Gastrocnemius medialis (tissue), 4 donors: ENCODE measurements at regions of chr1 and their contacts with region 1.

Region 1: GRCh38 chr1:205528887-205529825 is 24.7 kb downstream of the CDK18 start:
- DNase-seq: peak; percentile 35 to 39
- ATAC-seq: peak; percentile 66 to 77
- H3K4me3 ChIP-seq: peak overlapping the region; percentile 33 to 56 (median 46)
- H3K27ac ChIP-seq: peak overlapping the region in 1 of 4 donors; percentile 30
- H3K4me1 ChIP-seq: peaks cover 0 to 3% of the 10 kb centered on the region in 2 donors
- H3K27me3 ChIP-seq: peaks cover 0 to 3% (median 0%) of the 10 kb centered on the region in 3 donors
- CTCF ChIP-seq: peak; percentile 37 to 96 (median 91)
- POLR2A ChIP-seq: no peak

Region 2: GRCh38 chr1:205354259-205354904 is 174.8 kb before region 1 on chr1:
- in situ Hi-C with region 1: loop called in 2 of 4 experiments (anchors 10 kb)
- intact Hi-C with region 1: loop called (anchors 5 kb)
- DNase-seq: no peak
- ATAC-seq: peak in 1 of 2 donors; percentile 58
- H3K4me3 ChIP-seq: no peak overlapping the region
- H3K27ac ChIP-seq: no peak overlapping the region
- H3K4me1 ChIP-seq: no peaks in the 10 kb centered on the region
- H3K27me3 ChIP-seq: peaks cover 2 to 12% (median 7%) of the 10 kb centered on the region in 3 donors
- CTCF ChIP-seq: peak; percentile 51 to 76 (median 68)
- POLR2A ChIP-seq: no peak

Region 3: GRCh38 chr1:205396967-205397616 is 132.1 kb before region 1 on chr1:
- in situ Hi-C with region 1: loop called in 1 of 4 experiments (anchors 10 kb)
- intact Hi-C with region 1: loop called (anchors 1 kb)
- DNase-seq: no peak
- ATAC-seq: peak; percentile 83 to 85
- H3K4me3 ChIP-seq: no peak overlapping the region
- H3K27ac ChIP-seq: no peak overlapping the region
- H3K4me1 ChIP-seq: no peaks in the 10 kb centered on the region
- H3K27me3 ChIP-seq: no peaks in the 10 kb centered on the region
- CTCF ChIP-seq: peak; percentile 49 to 73 (median 71)
- POLR2A ChIP-seq: no peak

Region 4: DNA sequence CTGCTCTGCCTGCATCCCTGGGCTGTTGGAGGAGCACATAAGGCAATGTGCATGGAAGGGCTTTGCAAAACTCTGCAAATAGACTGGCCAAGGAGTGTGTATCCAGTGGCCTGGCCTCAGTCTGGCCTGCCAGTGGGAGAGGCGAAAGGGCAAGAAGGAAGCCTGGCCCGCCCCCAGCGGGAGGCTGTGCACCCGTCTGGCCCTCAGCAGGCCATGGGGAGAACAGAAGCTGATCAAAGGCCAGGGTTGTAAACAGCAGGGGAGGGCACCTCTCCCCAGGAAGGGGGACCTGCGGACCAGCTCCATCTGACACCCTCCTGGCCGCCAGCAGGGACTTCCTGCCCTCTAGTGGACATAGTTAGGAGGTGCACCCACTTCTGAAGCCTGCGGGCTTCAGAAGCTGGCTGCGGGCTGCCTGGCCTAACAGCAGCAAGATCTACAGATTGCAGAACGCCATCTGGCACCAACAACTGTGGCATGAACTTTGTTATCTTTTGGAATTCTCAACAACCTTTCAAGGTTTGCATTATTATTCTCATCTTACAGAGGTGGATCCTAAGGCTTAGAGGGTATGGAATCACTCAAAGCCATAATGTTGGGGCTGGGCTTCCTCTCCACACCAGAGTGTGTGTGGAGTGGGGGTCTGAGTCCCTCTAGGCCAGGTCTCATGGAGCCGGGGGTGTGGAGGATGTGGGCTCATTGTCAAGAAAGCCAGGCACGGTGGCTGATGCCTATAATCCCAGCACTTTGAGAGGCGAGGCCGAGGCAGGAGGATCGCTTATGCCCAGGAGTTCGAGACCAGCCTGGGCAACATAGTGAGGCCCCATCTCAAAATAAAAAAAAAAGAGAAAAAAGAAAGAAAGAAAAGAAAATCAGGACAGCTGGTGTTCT is 43.6 kb before region 1 on chr1:
- in situ Hi-C with region 1: loop called in 3 of 4 experiments (anchors 5 kb)
- intact Hi-C with region 1: loop called (anchors 1 kb)
- DNase-seq: peak in 1 of 2 donors; percentile 36
- ATAC-seq: peak; percentile 73 to 81
- H3K4me3 ChIP-seq: no peak overlapping the region
- H3K27ac ChIP-seq: no peak overlapping the region
- H3K4me1 ChIP-seq: no peaks in the 10 kb centered on the region
- H3K27me3 ChIP-seq: peaks cover 15 to 32% (median 23%) of the 10 kb centered on the region in 3 donors
- CTCF ChIP-seq: peak; percentile 78 to 97 (median 86)
- POLR2A ChIP-seq: no peak

Region 5: DNA sequence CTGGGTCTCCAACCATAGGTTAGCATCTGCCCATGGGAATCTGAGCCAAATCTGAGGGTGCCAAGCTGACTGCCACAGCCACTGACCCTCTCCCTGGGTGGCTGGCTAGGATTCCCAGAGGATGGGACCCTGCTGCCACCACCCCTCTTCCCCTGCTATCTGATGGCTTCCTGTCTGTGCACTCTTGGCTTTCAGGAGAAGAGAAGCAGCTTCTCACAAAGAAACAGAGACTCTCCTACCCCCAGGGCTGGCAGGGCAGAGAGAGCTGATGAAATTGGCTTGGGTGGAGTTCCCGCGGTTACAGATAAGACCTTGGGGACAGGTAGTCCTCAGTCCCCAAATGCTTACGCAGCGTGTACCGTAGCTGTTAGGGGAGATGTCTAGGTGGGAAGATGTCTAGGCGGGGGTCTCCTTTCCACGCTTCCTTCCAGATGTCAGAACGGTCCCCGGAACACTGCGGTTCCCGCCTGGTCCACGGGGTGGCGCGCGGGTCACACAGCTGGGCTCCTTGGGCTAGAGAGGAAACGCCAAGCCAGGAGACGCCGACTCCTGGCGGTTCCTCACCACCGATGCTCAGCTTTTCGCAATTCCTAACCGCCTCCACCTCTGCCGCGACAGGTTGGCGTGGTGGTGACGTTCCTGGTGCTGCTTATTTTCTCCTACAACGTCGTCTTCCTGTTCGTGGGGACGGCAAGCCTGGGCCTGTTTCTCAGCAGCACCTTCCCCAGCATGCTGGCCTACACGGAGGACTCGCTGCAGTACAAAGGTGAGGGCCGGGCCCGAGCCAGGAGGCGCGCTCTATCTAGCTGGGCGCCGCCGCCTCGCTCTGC is 62.6 kb after region 1 on chr1:
- in situ Hi-C with region 1: no loop called
- intact Hi-C with region 1: loop called (anchors 5 kb)
- DNase-seq: peak; percentile 58 to 74
- ATAC-seq: peak; percentile 80 to 94
- H3K4me3 ChIP-seq: peak overlapping the region; percentile 38 to 76 (median 46)
- H3K27ac ChIP-seq: no peak overlapping the region
- H3K4me1 ChIP-seq: no peaks in the 10 kb centered on the region
- H3K27me3 ChIP-seq: no peaks in the 10 kb centered on the region
- CTCF ChIP-seq: peak; percentile 98 to 99 (median 99)
- POLR2A ChIP-seq: no peak

Region 6: DNA sequence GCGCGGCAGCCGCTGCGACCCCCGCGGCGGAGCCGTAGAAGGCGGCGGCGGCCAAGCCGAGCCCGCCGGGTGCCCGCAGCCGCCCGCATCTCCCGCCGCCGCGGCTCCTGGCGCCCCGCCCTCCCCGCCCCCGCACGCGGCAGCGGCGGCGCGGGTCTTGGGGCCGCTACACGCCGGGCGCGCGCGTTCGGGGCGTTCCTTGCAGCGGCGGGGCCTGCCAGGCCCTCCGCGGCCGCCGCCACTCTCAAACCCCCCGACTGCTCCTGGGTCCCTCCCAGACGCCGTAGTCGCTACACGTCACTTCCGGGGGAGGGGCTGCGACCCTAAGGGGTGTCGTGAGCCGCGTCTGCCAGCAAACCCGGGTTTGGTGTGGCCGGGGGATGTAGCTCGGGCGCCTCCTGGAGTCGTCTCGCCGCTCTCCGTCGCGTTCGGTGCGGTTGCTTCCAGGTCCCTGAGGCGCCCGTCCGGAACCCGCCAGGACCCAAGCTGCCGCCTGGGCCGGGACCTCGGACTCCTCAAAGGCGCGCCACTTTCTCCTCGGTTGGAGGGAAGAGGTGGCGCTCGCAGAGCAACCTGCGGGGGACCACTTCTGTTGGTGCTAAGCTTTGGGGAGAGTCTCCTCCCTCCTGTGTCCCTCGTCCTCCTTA is 102.7 kb after region 1 on chr1 and contains the start of gene ELK4:
- in situ Hi-C with region 1: no loop called
- intact Hi-C with region 1: loop called (anchors 1 kb)
- DNase-seq: peak; percentile 96 to 97
- ATAC-seq: peak; percentile 89 to 94
- H3K4me3 ChIP-seq: peak within 1 kb of the TSS; percentile 65 to 90 (median 78)
- H3K27ac ChIP-seq: peak within 1 kb of the TSS; percentile 93 to 97 (median 96)
- H3K4me1 ChIP-seq: peaks cover 43% of the 10 kb centered on the region in 2 donors
- H3K27me3 ChIP-seq: no peaks in the 10 kb centered on the region
- CTCF ChIP-seq: peak; percentile 54 to 78 (median 68)
- POLR2A ChIP-seq: peak; percentile 98
- total RNA-seq, gene ELK4: 17.3 to 24.2 (median 20.1) TPM

Region 7: DNA sequence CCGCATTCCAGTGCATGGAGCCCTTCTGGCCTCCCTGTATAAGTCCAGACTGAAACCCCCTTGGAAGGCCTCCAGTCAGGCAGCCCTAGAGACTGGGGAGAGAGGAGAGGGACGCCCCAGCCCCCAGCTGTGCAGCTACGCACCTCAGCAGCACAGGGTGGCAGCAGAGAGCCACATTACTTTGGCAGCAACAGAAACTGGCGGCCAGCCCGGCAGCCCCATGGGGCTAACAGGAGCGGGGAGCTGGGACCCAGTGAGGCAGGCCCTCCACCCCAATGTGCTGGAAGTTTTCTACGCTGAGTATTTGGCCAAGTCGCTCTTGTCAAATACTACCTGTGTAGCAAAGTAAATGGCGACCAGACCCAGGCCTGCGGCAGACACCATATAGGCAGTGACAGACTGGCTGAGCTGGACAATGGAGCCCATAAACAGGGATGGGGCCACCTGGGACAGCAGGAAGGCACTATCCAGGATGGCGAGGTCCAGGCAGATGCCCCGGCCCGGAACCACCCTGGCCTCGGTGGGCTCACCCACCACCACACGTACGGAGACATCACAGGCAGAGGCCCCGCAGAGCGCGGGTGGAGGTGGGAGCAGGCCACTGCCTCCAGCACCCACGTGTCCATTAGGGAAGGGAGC is 129.9 kb after region 1 on chr1:
- in situ Hi-C with region 1: no loop called
- intact Hi-C with region 1: loop called (anchors 1 kb)
- DNase-seq: peak; percentile 48 to 62
- ATAC-seq: peak; percentile 68 to 71
- H3K4me3 ChIP-seq: no peak overlapping the region
- H3K27ac ChIP-seq: no peak overlapping the region
- H3K4me1 ChIP-seq: peaks cover 0 to 4% of the 10 kb centered on the region in 2 donors
- H3K27me3 ChIP-seq: no peaks in the 10 kb centered on the region
- CTCF ChIP-seq: peak; percentile 78 to 90 (median 88)
- POLR2A ChIP-seq: no peak